BJ (cell line): ENCODE measurements at regions of chr19 and their contacts with region 1.

Region 1: GRCh38 chr19:40305403-40305802 is 20.3 kb upstream of the AKT2 start:
- DNase-seq: peak; percentile 26
- H3K4me3 ChIP-seq: no peak overlapping the region
- H3K27me3 ChIP-seq: no peaks in the 10 kb centered on the region
- CTCF ChIP-seq: peak; percentile 77

Region 2: DNA sequence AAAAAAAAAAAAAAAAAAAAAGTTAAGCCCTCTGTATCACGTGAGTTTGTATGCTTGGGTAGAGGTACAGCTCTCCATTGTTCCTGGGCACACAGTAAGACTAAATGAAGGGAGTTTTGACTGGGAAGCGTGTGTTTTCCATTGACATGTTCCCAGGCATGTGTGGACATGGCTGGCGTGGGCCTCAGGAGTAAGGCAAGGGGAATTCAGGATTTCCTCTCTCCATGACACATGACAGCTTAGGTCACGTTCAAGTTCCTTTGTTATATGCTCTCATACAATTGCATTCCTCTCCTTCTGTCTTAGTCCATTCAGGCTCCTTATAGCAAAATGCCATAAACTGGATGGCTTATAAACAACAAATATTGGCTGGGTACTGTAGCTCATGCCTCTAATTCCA is 131.3 kb before region 1 on chr19:
- CTCF ChIA-PET with region 1: no interaction called
- POLR2A ChIA-PET with region 1: no interaction called
- DNase-seq: no peak
- H3K4me3 ChIP-seq: no peak overlapping the region
- H3K27me3 ChIP-seq: no peaks in the 10 kb centered on the region
- CTCF ChIP-seq: no peak

Region 3: GRCh38 chr19:40239415-40240226 is 65.8 kb before region 1 on chr19:
- CTCF ChIA-PET with region 1: no interaction called
- POLR2A ChIA-PET with region 1: no interaction called
- DNase-seq: no peak
- H3K4me3 ChIP-seq: no peak overlapping the region
- H3K27me3 ChIP-seq: no peaks in the 10 kb centered on the region
- CTCF ChIP-seq: no peak

Region 4: GRCh38 chr19:40252395-40252794 is 53.0 kb before region 1 on chr19:
- CTCF ChIA-PET with region 1: no interaction called
- POLR2A ChIA-PET with region 1: no interaction called
- DNase-seq: no peak
- H3K4me3 ChIP-seq: no peak overlapping the region
- H3K27me3 ChIP-seq: no peaks in the 10 kb centered on the region
- CTCF ChIP-seq: no peak

Region 5: GRCh38 chr19:40315812-40316475 is 10.5 kb after region 1 on chr19:
- CTCF ChIA-PET with region 1: interaction called, 11 read pairs
- POLR2A ChIA-PET with region 1: no interaction called
- DNase-seq: no peak
- H3K4me3 ChIP-seq: no peak overlapping the region
- H3K27me3 ChIP-seq: no peaks in the 10 kb centered on the region
- CTCF ChIP-seq: no peak

Region 6: GRCh38 chr19:40322871-40323615 is 17.6 kb after region 1 on chr19:
- CTCF ChIA-PET with region 1: interaction called, 10 read pairs
- POLR2A ChIA-PET with region 1: no interaction called
- DNase-seq: no peak
- H3K4me3 ChIP-seq: no peak overlapping the region
- H3K27me3 ChIP-seq: no peaks in the 10 kb centered on the region
- CTCF ChIP-seq: no peak

Region 7: DNA sequence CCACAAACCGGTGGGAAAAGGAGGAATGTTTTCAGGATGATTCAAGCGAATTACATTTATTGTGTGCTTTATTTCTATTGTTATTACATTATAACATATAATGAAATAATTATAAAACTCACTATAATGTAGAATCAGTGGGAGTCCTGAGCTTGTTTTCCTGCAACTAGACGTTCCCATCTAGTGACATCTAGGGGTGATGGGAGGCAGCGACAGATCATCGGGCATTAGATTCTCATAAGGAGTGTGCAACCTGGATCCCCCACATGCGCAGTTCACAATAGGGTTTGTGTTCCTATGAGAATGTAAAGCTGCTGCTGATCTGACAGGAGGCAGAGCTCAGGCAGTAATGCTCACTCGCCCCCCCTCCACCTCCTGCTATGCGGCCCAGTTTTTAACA is 215.9 kb after region 1 on chr19:
- CTCF ChIA-PET with region 1: interaction called, 13 read pairs
- POLR2A ChIA-PET with region 1: no interaction called
- DNase-seq: no peak
- H3K4me3 ChIP-seq: no peak overlapping the region
- H3K27me3 ChIP-seq: no peaks in the 10 kb centered on the region
- CTCF ChIP-seq: peak; percentile 49

Region 8: DNA sequence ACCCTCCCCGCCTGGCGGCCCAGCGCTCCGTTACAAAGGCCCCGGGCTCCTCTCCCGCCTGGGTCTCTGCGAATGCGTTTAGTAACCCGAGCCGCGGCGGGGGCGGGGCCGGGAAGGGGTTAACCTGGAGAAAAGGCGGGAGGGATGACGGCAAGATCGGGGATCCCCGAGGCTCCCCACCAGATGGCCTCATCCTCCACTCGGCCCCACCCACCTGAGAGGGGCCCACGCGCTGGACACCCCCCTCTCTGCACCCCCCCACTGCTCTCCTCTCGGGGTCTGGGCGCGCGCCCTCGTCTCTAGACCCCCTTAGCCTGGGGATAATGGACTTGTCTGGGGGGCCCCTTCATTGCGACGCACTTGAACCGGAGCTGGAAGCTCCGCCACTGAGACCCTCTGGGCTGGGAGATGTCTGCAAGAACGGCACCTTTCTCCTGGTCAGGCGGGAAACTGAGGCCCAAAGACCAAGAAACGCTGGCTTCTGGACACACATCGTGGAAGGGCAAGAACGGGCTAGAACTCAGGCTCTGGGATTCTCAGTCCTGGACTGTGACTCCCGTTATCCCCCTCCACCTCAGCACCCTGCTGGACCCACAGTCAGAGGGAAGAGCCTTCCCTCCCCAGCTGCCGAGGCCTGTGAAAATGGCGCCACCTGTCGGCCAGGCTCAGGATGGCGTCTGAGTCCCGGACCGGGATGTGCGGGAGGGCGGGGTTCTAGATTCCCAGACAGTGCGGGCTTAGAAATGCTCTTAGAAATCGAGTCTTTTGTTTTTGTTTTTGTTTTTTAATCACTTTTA is 292.9 kb after region 1 on chr19:
- CTCF ChIA-PET with region 1: interaction called, 26 read pairs
- POLR2A ChIA-PET with region 1: no interaction called
- DNase-seq: no peak
- H3K4me3 ChIP-seq: peak overlapping the region; percentile 37
- H3K27me3 ChIP-seq: 0 out of 2 replicates have a peak, but pooled peaks cover 2% of the 10 kb centered on the region
- CTCF ChIP-seq: peak; percentile 99